Activated B cell treated with CpG ODN at 0.5 μM for 24 hours (primary cell): ENCODE measurements at regions of chr9 and their contacts with region 1.

Region 1: GRCh38 chr9:76658535-76659231 is 105.6 kb upstream of the PCA3 start:
- DNase-seq: no peak
- ATAC-seq: peak; percentile 94
- H3K4me3 Mint-ChIP-seq: no peak overlapping the region
- H3K27ac Mint-ChIP-seq: no peak overlapping the region
- H3K4me1 Mint-ChIP-seq: peaks cover 41% of the 10 kb centered on the region
- H3K27me3 Mint-ChIP-seq: peaks cover 3% of the 10 kb centered on the region
- CTCF ChIP-seq: peak; percentile 19

Region 2: DNA sequence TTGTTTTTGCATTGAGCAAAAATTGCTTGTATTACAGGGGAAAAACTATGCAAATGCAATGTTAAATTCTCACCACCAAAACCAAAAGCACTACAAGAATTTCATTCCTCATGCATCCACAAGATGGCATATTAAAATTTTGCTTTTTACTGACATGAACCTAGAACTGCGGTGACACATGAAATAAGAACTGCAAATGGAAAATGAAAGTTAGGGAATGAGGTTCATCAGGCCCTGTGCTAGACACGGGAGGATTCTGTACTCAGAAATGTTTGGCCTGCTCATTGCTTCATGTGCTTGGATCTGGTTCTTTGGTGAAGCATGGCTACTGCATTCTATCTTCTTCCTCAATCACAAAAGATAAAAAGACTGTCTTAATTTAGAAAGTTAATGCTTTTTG is 255.3 kb before region 1 on chr9:
- CTCF ChIA-PET with region 1: no interaction called
- POLR2A ChIA-PET with region 1: no interaction called
- intact Hi-C with region 1: loop called (anchors 1 kb)
- DNase-seq: no peak
- ATAC-seq: peak; percentile 70
- H3K4me3 Mint-ChIP-seq: peak overlapping the region; percentile 8
- H3K27ac Mint-ChIP-seq: peak overlapping the region; percentile 19
- H3K4me1 Mint-ChIP-seq: peaks cover 13% of the 10 kb centered on the region
- H3K27me3 Mint-ChIP-seq: no peaks in the 10 kb centered on the region
- CTCF ChIP-seq: peak; percentile 20

Region 3: DNA sequence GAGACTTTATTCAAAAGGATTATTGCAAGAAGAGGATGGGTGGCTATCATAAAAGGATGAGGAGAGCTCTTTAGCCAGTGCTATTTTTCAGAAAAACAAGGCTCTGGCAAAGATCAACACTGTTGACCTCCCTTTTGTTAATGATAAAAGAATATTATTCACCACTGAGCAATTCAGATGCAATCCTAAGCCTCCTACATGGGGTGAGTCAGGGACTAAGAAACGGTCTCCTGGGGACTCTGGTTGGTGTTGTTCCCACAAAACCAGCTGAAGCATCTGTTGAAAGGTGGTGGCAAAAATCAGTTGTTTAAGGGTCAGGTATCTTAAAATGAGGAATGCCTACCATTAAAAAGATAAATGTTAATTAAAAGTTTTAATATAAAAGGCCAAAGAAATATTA is 207.4 kb before region 1 on chr9:
- CTCF ChIA-PET with region 1: interaction called, 76 read pairs
- POLR2A ChIA-PET with region 1: no interaction called
- intact Hi-C with region 1: loop called (anchors 1 kb)
- DNase-seq: no peak
- ATAC-seq: no peak
- H3K4me3 Mint-ChIP-seq: no peak overlapping the region
- H3K27ac Mint-ChIP-seq: no peak overlapping the region
- H3K4me1 Mint-ChIP-seq: peaks cover 4% of the 10 kb centered on the region
- H3K27me3 Mint-ChIP-seq: no peaks in the 10 kb centered on the region
- CTCF ChIP-seq: no peak

Region 4: GRCh38 chr9:76562511-76562911 is 96.2 kb before region 1 on chr9:
- CTCF ChIA-PET with region 1: no interaction called
- POLR2A ChIA-PET with region 1: no interaction called
- intact Hi-C with region 1: loop called (anchors 5 kb)
- DNase-seq: no peak
- ATAC-seq: peak; percentile 57
- H3K4me3 Mint-ChIP-seq: peak overlapping the region; percentile 55
- H3K27ac Mint-ChIP-seq: peak overlapping the region; percentile 65
- H3K4me1 Mint-ChIP-seq: peaks cover 63% of the 10 kb centered on the region
- H3K27me3 Mint-ChIP-seq: no peaks in the 10 kb centered on the region
- CTCF ChIP-seq: no peak

Region 5: GRCh38 chr9:76704593-76705204 is 46.0 kb after region 1 on chr9:
- CTCF ChIA-PET with region 1: interaction called, 7 read pairs
- POLR2A ChIA-PET with region 1: no interaction called
- intact Hi-C with region 1: loop called (anchors 1 kb)
- DNase-seq: no peak
- ATAC-seq: peak; percentile 40
- H3K4me3 Mint-ChIP-seq: no peak overlapping the region
- H3K27ac Mint-ChIP-seq: no peak overlapping the region
- H3K4me1 Mint-ChIP-seq: peaks cover 6% of the 10 kb centered on the region
- H3K27me3 Mint-ChIP-seq: peaks cover 27% of the 10 kb centered on the region
- CTCF ChIP-seq: peak; percentile 29

Region 6: GRCh38 chr9:76905791-76906650 is 247.3 kb after region 1 on chr9 and contains the start of gene PRUNE2:
- CTCF ChIA-PET with region 1: no interaction called
- POLR2A ChIA-PET with region 1: no interaction called
- intact Hi-C with region 1: no loop called
- DNase-seq: no peak
- ATAC-seq: peak; percentile 37
- H3K4me3 Mint-ChIP-seq: no peak within 1 kb of the TSS
- H3K27ac Mint-ChIP-seq: no peak within 1 kb of the TSS
- H3K4me1 Mint-ChIP-seq: peaks cover 6% of the 10 kb centered on the region
- H3K27me3 Mint-ChIP-seq: peaks cover 45% of the 10 kb centered on the region
- CTCF ChIP-seq: no peak
- total RNA-seq, gene PRUNE2: not detected in 2 replicates

Region 7: GRCh38 chr9:77111408-77111807 is 452.7 kb after region 1 on chr9:
- CTCF ChIA-PET with region 1: no interaction called
- POLR2A ChIA-PET with region 1: no interaction called
- intact Hi-C with region 1: no loop called
- DNase-seq: no peak
- ATAC-seq: no peak
- H3K4me3 Mint-ChIP-seq: no peak overlapping the region
- H3K27ac Mint-ChIP-seq: no peak overlapping the region
- H3K4me1 Mint-ChIP-seq: no peaks in the 10 kb centered on the region
- H3K27me3 Mint-ChIP-seq: peaks cover 11% of the 10 kb centered on the region
- CTCF ChIP-seq: no peak

Region 8: DNA sequence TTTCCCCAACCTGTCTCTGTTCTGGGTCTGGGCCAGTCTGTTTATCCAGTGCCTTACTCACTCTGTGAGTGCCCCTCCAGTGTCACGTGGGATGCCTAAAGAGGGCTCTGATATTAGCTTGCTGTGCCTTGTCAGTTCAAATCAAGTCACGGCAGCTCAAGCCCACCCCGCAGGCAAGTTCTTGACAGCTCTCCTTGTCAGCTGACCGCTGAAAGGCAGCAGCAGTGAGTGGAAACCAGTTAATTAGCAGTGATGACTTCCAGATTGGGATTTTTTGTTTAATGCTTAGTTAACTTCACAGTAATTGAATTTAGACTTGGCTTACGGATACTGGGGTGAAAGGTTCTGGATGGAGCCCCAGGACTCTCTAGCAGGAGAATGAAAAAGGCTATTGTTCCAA is 1848.4 kb after region 1 on chr9:
- CTCF ChIA-PET with region 1: no interaction called
- POLR2A ChIA-PET with region 1: no interaction called
- intact Hi-C with region 1: no loop called
- DNase-seq: no peak
- ATAC-seq: no peak
- H3K4me3 Mint-ChIP-seq: no peak overlapping the region
- H3K27ac Mint-ChIP-seq: no peak overlapping the region
- H3K4me1 Mint-ChIP-seq: no peaks in the 10 kb centered on the region
- H3K27me3 Mint-ChIP-seq: no peaks in the 10 kb centered on the region
- CTCF ChIP-seq: no peak